Ovary (tissue), 10 donors: ENCODE measurements at regions of chr1 and their contacts with region 1.

Region 1: DNA sequence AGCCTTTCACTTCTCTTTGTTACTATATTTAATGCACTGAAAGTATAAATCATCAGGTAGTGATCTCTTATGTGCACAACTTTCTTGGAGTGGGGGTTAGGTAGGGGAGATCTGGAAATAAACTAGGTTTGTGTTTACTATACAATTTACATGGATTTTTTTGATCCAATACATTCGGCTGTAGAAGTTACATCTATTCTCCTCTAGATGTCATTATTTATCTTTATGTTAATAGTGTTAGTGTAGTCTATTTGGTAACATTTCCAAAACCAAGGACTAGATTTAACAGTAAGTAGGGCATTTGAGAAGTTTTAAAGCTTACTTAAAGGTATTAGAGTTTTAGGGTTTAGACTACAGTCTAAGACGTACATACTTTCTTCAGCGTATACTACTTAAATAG is 5.4 kb downstream of the VPS45 start:
- DNase-seq: no peak
- H3K4me3 ChIP-seq: no peak overlapping the region
- H3K27ac ChIP-seq: no peak overlapping the region
- H3K4me1 ChIP-seq: no peaks in the 10 kb centered on the region
- H3K27me3 ChIP-seq: no peaks in the 10 kb centered on the region
- CTCF ChIP-seq: peak in 2 of 3 donors; percentile 25 to 48
- EP300 ChIP-seq: no peak
- POLR2A ChIP-seq: no peak

Region 2: DNA sequence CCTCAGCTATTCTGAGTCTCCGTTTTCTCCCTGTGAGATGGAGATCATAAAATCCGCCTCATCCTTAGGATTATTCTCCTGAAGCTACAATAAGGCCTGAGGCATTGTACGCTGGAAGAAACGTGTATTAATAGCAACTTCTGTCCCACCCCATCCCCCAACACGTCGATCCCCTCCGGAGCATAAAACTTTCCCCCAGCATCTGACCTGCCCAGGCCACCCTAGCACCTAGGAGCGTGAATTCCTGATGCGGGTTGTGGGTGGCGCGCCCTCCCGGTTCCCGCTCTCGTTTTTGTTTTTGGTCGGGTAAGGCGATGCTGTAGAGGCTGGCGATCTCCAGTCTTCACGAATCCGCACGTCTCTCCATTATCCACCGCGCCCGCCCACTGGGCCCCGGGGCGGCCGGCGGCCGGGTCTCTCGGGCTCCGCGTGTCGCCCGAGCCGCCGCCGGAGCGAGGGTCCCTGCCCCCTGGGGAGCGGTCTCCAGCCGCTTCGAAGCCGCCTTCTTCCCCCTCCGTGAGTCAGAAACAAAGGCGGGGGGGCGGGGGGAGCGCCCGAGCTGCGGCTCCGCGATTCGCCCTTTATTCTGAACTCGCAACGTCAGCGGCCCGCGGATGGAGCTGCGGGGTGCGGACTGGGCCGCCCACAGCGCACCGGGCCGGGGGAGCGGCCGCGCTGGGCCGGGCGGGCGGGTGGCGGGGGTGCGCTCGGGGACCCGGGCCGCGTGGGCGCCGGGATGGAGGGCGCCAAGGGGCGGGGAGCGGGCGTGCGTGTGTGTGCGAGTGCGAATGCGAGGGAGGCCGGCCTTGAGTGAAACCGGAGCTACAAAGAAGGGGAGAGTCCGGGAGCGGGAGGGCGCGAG is 76.5 kb after region 1 on chr1 and contains the start of gene PLEKHO1:
- intact Hi-C with region 1: loop called in 1 of 4 experiments (anchors 5 kb)
- DNase-seq: peak; percentile 89 to 93 (median 90)
- H3K4me3 ChIP-seq: peak within 1 kb of the TSS; percentile 75
- H3K27ac ChIP-seq: peak within 1 kb of the TSS; percentile 83 to 97
- H3K4me1 ChIP-seq: peaks cover 17% of the 10 kb centered on the region
- H3K27me3 ChIP-seq: no peaks in the 10 kb centered on the region
- CTCF ChIP-seq: no peak
- EP300 ChIP-seq: no peak
- POLR2A ChIP-seq: peak; percentile 87
- total RNA-seq, gene PLEKHO1: 40.6 to 68.9 (median 55.6) TPM

Region 3: DNA sequence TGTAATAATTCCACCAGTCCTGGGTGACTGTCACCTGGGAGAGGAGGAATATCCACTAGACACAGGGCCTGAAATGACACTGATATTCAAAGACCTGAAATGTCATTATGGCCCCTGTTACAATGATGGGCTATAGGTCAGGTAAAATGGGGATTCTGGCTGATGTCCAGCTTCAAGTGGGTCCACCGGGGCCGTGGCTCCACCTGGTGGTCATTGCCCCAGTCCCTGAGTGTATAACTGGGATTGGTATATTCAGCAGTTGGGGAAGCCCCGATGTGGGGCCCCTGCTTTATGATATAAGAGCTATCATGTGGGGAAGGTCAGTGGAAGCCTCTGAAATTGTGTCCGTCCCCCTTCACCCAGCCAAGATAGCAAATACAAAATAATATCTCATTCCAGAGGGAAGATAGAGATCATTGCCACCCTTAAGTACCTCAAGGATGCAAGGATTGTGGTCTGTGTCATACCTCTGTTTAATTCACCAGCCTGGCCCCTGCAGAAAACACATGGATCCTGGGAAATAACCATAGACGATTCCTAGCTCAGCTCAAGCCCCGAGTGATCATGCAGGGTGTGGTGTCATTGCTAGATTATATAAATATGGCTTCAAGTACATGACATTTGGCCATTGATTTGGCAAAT is 96.1 kb after region 1 on chr1:
- intact Hi-C with region 1: loop called (anchors 2 to 5 kb)
- DNase-seq: peak; percentile 63 to 84 (median 81)
- H3K4me3 ChIP-seq: no peak overlapping the region
- H3K27ac ChIP-seq: no peak overlapping the region
- H3K4me1 ChIP-seq: peaks cover 2% of the 10 kb centered on the region
- H3K27me3 ChIP-seq: no peaks in the 10 kb centered on the region
- CTCF ChIP-seq: peak; percentile 57 to 93 (median 88)
- EP300 ChIP-seq: no peak
- POLR2A ChIP-seq: no peak